HepG2 (cell line): ENCODE measurements at regions of chr20 and their contacts with region 1.

Region 1: GRCh38 chr20:54680872-54681619 is 205.7 kb downstream of the DOK5 start:
- DNase-seq: peak; percentile 65
- ATAC-seq: peak; percentile 74
- H3K4me3 ChIP-seq: no peak overlapping the region
- H3K27ac ChIP-seq: no peak overlapping the region
- H3K4me1 ChIP-seq: no peaks in the 10 kb centered on the region
- H3K27me3 ChIP-seq: peaks cover 0 to 17% of the 10 kb centered on the region in 2 experiments; a peak in 2 of 5 replicates
- CTCF ChIP-seq: peak; percentile 78
- EP300 ChIP-seq: no peak
- POLR2A ChIP-seq: no peak
- RAD21 ChIP-seq: 0 out of 2 replicates have a peak, but pooled peaks have one; percentile 32

Region 2: DNA sequence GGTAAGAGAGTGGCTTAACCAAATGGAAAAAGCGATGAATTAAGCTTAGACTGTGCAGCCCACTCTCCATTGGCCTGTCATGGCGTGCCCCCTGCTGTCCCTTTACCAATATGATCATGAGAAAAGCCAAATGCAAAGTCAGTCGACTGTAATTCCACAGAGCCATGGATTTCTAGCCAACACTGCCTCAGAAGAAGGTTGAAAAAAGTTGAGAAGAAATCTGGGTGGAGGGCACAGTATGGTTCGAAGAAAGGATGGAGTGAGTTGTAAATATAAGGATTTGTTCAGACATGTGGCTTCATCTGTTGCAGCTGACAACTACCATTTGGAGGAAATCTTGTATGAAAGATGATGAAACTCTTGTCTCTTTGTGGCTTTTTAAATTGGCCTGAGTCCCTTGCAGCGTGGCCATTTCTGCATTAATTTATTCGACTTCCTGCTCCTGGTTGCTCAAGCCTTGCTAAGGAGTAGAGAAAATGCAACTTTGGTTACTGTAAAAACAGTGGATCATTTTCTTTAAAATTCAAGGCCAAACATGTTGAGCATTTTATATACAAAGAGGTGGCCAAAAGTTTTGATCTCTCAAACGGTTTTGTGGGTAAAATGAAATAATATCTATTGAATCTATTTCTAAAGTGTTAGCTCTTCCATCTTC is 45.8 kb after region 1 on chr20:
- CTCF ChIA-PET with region 1: interaction called, 5 read pairs
- POLR2A ChIA-PET with region 1: no interaction called
- in situ Hi-C with region 1: no loop called
- intact Hi-C with region 1: loop called (anchors 1 kb)
- DNase-seq: no peak
- ATAC-seq: peak; percentile 71
- H3K4me3 ChIP-seq: no peak overlapping the region
- H3K27ac ChIP-seq: no peak overlapping the region
- H3K4me1 ChIP-seq: no peaks in the 10 kb centered on the region
- H3K27me3 ChIP-seq: no peaks in the 10 kb centered on the region
- CTCF ChIP-seq: peak; percentile 43
- EP300 ChIP-seq: no peak
- POLR2A ChIP-seq: no peak
- RAD21 ChIP-seq: no peak

Region 3: DNA sequence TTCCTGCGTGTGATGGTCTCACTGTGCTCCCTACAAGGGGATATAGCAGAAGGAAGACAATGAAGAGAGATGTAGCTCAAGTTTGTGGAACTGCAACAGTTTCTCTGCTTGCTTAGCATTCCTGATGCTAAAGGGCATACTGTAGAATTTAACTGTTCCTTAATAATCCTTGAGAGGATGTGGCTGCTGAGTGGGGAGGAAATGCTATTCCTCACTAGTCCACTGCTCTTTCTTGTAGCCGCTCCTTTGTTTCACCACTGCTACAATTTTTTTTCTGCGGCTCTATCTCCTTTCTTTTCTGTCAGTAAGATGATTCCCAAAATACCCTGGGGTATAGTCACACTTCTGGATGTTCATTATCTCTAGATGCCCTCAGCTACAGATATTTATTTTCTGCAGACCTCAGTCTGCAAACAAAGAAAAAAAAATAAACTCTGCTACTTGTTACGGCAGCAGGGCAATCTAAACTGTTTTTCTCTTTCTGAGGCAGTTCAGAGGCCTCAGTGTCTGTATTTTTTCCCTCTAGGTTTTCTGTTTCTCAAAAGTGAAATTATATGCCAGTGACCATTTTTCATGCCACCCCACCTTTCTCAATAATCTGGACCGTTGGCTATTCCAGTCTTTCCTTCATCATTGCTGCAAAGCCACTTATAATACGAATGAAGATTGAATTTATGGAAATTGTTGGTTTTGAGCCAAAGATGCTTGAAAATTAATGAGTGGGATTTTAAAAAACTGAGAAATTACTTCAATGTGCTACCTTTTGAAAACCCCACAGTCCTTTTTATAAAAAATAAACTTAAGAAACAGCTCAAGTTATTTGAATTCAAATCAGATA is 59.7 kb after region 1 on chr20:
- CTCF ChIA-PET with region 1: no interaction called
- POLR2A ChIA-PET with region 1: no interaction called
- in situ Hi-C with region 1: no loop called
- intact Hi-C with region 1: no loop called
- DNase-seq: no peak
- ATAC-seq: no peak
- H3K4me3 ChIP-seq: no peak overlapping the region
- H3K27ac ChIP-seq: no peak overlapping the region
- H3K4me1 ChIP-seq: no peaks in the 10 kb centered on the region
- H3K27me3 ChIP-seq: no peaks in the 10 kb centered on the region
- CTCF ChIP-seq: no peak
- EP300 ChIP-seq: no peak
- POLR2A ChIP-seq: no peak
- RAD21 ChIP-seq: no peak

Region 4: DNA sequence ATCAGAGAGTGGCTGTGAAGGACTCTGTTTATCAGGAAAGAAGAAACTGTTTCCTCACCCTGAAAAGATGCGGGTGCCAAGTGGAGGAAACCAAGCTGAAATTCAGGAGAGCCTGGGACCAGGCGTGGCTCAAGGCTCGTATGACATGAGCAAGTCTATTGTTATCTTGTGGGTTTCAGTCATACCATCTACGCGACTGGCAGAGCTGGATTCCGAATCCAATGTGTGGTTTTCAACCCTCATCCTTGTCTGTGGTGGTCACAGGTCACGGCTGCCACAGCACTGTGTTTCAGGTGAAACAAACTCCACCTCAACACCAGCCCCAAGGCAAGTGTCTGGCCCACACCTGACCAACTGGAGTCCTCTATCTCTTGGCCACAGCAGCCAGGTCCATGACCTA is 1576.6 kb after region 1 on chr20:
- CTCF ChIA-PET with region 1: no interaction called
- POLR2A ChIA-PET with region 1: no interaction called
- in situ Hi-C with region 1: loop called (anchors 5 kb)
- intact Hi-C with region 1: no loop called
- DNase-seq: no peak
- ATAC-seq: no peak
- H3K4me3 ChIP-seq: no peak overlapping the region
- H3K27ac ChIP-seq: no peak overlapping the region
- H3K4me1 ChIP-seq: no peaks in the 10 kb centered on the region
- H3K27me3 ChIP-seq: peaks cover 0 to 3% of the 10 kb centered on the region in 2 experiments; a peak in 1 of 5 replicates
- CTCF ChIP-seq: no peak
- EP300 ChIP-seq: no peak
- POLR2A ChIP-seq: no peak
- RAD21 ChIP-seq: no peak

Region 5: DNA sequence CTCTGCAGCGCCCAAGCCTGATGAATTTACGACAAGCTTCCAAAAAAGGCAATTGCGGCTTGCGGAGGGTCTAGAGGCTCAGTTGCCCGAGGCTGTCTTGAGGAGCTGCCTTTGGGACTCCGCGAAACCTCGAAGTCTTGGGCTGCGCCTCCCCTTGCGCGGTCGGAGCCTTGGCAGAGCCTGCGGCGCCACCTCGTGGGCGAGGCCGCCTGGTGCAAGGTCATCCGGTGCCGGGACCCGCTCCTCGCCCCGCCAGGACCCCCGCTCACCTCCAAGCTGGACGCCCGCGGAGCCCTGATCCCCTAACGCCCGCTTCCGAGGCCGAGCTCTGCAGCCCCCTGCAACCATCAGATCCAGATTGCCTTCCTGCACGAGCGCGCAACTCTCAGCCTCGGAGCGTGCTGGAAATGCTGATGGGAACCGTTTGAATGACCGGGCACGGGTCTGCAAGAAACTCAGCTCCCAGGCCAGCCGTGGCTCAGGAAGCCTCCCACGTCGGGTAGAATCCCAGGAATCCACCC is 1662.9 kb after region 1 on chr20:
- CTCF ChIA-PET with region 1: interaction called, 5 read pairs
- POLR2A ChIA-PET with region 1: no interaction called
- in situ Hi-C with region 1: loop called (anchors 10 kb)
- intact Hi-C with region 1: loop called (anchors 2 kb)
- DNase-seq: no peak
- ATAC-seq: peak; percentile 92
- H3K4me3 ChIP-seq: peak overlapping the region in 1 of 3 experiments; percentile 21; a peak in 1 of 6 replicates
- H3K27ac ChIP-seq: no peak overlapping the region
- H3K4me1 ChIP-seq: peaks cover 12% of the 10 kb centered on the region
- H3K27me3 ChIP-seq: peaks cover 0 to 7% of the 10 kb centered on the region in 2 experiments; a peak in 1 of 5 replicates
- CTCF ChIP-seq: peak; percentile 86
- EP300 ChIP-seq: no peak
- POLR2A ChIP-seq: no peak
- RAD21 ChIP-seq: peak; percentile 77